K562 (cell line): ENCODE measurements at regions of chr1 and their contacts with region 1.

Region 1: GRCh38 chr1:155167166-155168104 is 5.7 kb downstream of the KRTCAP2 start:
- DNase-seq: peak; percentile 83 to 95 (median 86)
- ATAC-seq: peak; percentile 93
- H3K4me3 ChIP-seq: peak overlapping the region; percentile 13; the same call in 1 of the 2 replicates
- H3K27ac ChIP-seq: no peak overlapping the region; the same call in 2 of the 3 replicates
- H3K4me1 ChIP-seq: peaks cover 10 to 11% of the 10 kb centered on the region in 2 experiments; a peak in 4 of 5 replicates
- H3K27me3 ChIP-seq: no peaks in the 10 kb centered on the region
- CTCF ChIP-seq: peak; percentile 97 to 99 (median 97)
- EP300 ChIP-seq: no peak
- POLR2A ChIP-seq: no peak
- RAD21 ChIP-seq: peak; percentile 98 to 99

Region 2: GRCh38 chr1:155113450-155113990 is 53.9 kb before region 1 on chr1:
- CTCF ChIA-PET with region 1: interaction called, 17 read pairs
- POLR2A ChIA-PET with region 1: no interaction called
- in situ Hi-C with region 1: no loop called
- intact Hi-C with region 1: loop called (anchors 5 kb)
- DNase-seq: no peak
- ATAC-seq: no peak
- H3K4me3 ChIP-seq: no peak overlapping the region
- H3K27ac ChIP-seq: no peak overlapping the region
- H3K4me1 ChIP-seq: peaks cover 0 to 7% of the 10 kb centered on the region in 2 experiments; a peak in 2 of 5 replicates
- H3K27me3 ChIP-seq: no peaks in the 10 kb centered on the region
- CTCF ChIP-seq: no peak
- EP300 ChIP-seq: no peak
- POLR2A ChIP-seq: no peak
- RAD21 ChIP-seq: no peak

Region 3: GRCh38 chr1:155236441-155236840 is 69.0 kb after region 1 on chr1:
- CTCF ChIA-PET with region 1: no interaction called
- POLR2A ChIA-PET with region 1: no interaction called
- in situ Hi-C with region 1: no loop called
- intact Hi-C with region 1: no loop called
- DNase-seq: no peak
- ATAC-seq: no peak
- H3K4me3 ChIP-seq: no peak overlapping the region
- H3K27ac ChIP-seq: no peak overlapping the region
- H3K4me1 ChIP-seq: peaks cover 0 to 4% of the 10 kb centered on the region in 2 experiments; a peak in 4 of 5 replicates
- H3K27me3 ChIP-seq: no peaks in the 10 kb centered on the region
- CTCF ChIP-seq: no peak
- EP300 ChIP-seq: no peak
- POLR2A ChIP-seq: no peak
- RAD21 ChIP-seq: no peak